ENCODE measurements at regions of chr7 and their contacts with region 1.

Region 1: GRCh38 chr7:121076350-121077164 is 88.0 kb downstream of the CPED1 start:
- DNase-seq: no peak
- ATAC-seq: no peak
- H3K4me3 ChIP-seq: no peak overlapping the region
- H3K27ac ChIP-seq: no peak overlapping the region
- H3K4me1 ChIP-seq: no peaks in the 10 kb centered on the region
- H3K27me3 ChIP-seq: no peaks in the 10 kb centered on the region
- CTCF ChIP-seq: no peak
- POLR2A ChIP-seq: no peak

Region 2: GRCh38 chr7:120987683-120988590 is 88.6 kb before region 1 on chr7:
- intact Hi-C with region 1: loop called (anchors 5 kb)
- DNase-seq: peak; percentile 85 to 91 (median 88)
- ATAC-seq: peak; percentile 92
- H3K4me3 ChIP-seq: no peak overlapping the region
- H3K27ac ChIP-seq: peak overlapping the region in 3 of 4 donors; percentile 10 to 21 (median 20)
- H3K4me1 ChIP-seq: peaks cover 15% of the 10 kb centered on the region
- H3K27me3 ChIP-seq: peaks cover 0 to 8% of the 10 kb centered on the region in 2 donors
- CTCF ChIP-seq: peak; percentile 72 to 90 (median 83)
- POLR2A ChIP-seq: no peak

Region 3: GRCh38 chr7:121138262-121138933 is 61.8 kb after region 1 on chr7:
- intact Hi-C with region 1: no loop called
- DNase-seq: peak; percentile 50 to 72 (median 65)
- ATAC-seq: peak; percentile 75
- H3K4me3 ChIP-seq: no peak overlapping the region
- H3K27ac ChIP-seq: no peak overlapping the region
- H3K4me1 ChIP-seq: no peaks in the 10 kb centered on the region
- H3K27me3 ChIP-seq: no peaks in the 10 kb centered on the region
- CTCF ChIP-seq: no peak
- POLR2A ChIP-seq: no peak

Measured in body of pancreas (tissue), 4 donors.